ENCODE measurements at regions of chr9 and their contacts with region 1.

Region 1: DNA sequence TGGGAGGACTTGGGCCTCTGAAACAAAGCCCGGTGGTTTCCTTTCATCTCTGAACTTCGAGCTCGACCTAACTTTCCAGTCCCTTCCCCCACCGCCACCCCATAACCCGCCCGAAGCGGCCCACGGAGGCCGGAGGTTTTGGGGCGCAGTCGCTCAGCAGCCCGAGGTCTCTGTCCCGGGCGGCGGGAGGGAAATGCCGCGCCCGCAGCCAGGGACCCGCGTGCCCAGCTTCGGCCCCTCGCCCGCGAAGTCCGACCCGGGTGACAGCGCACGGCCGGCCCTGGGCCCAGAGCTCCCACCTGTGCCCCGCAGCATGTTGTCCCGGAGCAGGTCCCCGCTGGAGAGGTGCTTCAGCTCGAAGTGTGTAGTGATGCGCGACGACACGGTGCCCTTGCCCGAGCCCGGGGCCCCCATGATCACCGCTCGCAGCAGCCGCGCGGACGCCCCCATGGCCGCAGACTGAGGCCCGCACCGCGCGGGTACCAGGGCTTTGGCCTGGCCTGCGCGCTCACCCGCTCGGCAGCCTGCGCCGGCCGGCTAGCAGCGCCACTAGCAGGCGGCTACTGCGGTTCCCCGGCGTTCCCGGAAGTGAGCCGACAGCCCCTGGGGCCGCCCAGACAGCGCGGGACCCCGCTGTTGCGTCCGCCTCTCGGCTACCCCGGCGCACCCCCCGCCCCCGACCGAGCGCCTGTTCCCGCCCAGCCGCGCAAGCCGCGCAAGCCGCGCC is at the start of gene AK3:
- DNase-seq: peak; percentile 51 to 65 (median 57)
- H3K4me3 ChIP-seq: peak within 1 kb of the TSS; percentile 59 to 98 (median 89)
- H3K4me3 Mint-ChIP-seq: peak within 1 kb of the TSS; percentile 99
- H3K27ac ChIP-seq: peak within 1 kb of the TSS in 1 of 2 donors; percentile 45
- H3K27ac Mint-ChIP-seq: peak within 1 kb of the TSS; percentile 63 to 91 (median 72)
- H3K4me1 ChIP-seq: peaks cover 16 to 27% of the 10 kb centered on the region in 2 donors
- H3K4me1 Mint-ChIP-seq: peaks cover 27% of the 10 kb centered on the region
- H3K27me3 ChIP-seq: no peaks in the 10 kb centered on the region
- H3K27me3 Mint-ChIP-seq: peaks cover 2 to 3% (median 2%) of the 10 kb centered on the region in 3 donors
- CTCF ChIP-seq: no peak
- polyA plus RNA-seq, gene AK3: 3.7 to 14.5 (median 13.8) TPM

Region 2: GRCh38 chr9:4679268-4680172 is 61.3 kb before region 1 on chr9 and contains the start of gene CDC37L1:
- intact Hi-C with region 1: loop called in 1 of 2 experiments (anchors 10 kb)
- DNase-seq: peak; percentile 93 to 96 (median 96)
- H3K4me3 ChIP-seq: peak within 1 kb of the TSS; percentile 66 to 80 (median 79)
- H3K4me3 Mint-ChIP-seq: no peak within 1 kb of the TSS
- H3K27ac ChIP-seq: peak within 1 kb of the TSS; percentile 90 to 95
- H3K27ac Mint-ChIP-seq: no peak within 1 kb of the TSS
- H3K4me1 ChIP-seq: peaks cover 21 to 28% of the 10 kb centered on the region in 2 donors
- H3K4me1 Mint-ChIP-seq: peaks cover 3% of the 10 kb centered on the region
- H3K27me3 ChIP-seq: no peaks in the 10 kb centered on the region
- H3K27me3 Mint-ChIP-seq: peaks cover 0 to 9% (median 1%) of the 10 kb centered on the region in 3 donors
- CTCF ChIP-seq: peak; percentile 81
- polyA plus RNA-seq, gene CDC37L1: 2.8 to 4.4 (median 2.8) TPM

Region 3: GRCh38 chr9:4994166-4994890 is 253.5 kb after region 1 on chr9:
- intact Hi-C with region 1: loop called in 1 of 2 experiments (anchors 5 kb)
- DNase-seq: no peak
- H3K4me3 ChIP-seq: no peak overlapping the region
- H3K4me3 Mint-ChIP-seq: no peak overlapping the region
- H3K27ac ChIP-seq: peak overlapping the region in 1 of 2 donors; percentile 21
- H3K27ac Mint-ChIP-seq: peak overlapping the region in 4 of 7 donors; percentile 15 to 70 (median 51)
- H3K4me1 ChIP-seq: peaks cover 3 to 21% of the 10 kb centered on the region in 2 donors
- H3K4me1 Mint-ChIP-seq: peaks cover 42% of the 10 kb centered on the region
- H3K27me3 ChIP-seq: no peaks in the 10 kb centered on the region
- H3K27me3 Mint-ChIP-seq: no peaks in the 10 kb centered on the region
- CTCF ChIP-seq: no peak